OCI-LY7 (cell line): ENCODE measurements at regions of chr1 and their contacts with region 1.

Region 1: DNA sequence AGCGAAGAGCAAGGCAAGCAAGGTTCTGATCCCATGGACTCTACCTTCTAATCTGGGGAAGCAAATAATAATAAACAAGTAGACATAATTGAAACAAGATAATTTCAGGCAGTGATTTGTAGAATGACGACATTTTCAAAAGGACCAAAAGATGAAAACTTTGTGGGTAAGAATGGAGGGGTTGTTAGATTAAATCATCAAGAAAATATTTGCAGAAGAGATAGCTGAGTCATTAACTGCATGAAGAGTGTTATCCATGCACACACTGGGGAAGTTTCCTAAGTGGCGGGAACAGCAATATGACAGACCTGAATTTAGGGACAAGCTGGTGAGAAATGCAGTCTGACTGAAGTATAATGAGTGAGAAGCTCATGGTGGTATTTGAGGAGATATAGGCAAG is 583.1 kb upstream of the RGS18 start:
- DNase-seq: no peak
- H3K4me3 ChIP-seq: no peak overlapping the region
- H3K27ac ChIP-seq: no peak overlapping the region
- H3K4me1 ChIP-seq: no peaks in the 10 kb centered on the region
- CTCF ChIP-seq: no peak

Region 2: GRCh38 chr1:191438979-191439378 is 136.2 kb before region 1 on chr1:
- CTCF ChIA-PET with region 1: no interaction called
- POLR2A ChIA-PET with region 1: no interaction called
- intact Hi-C with region 1: no loop called
- DNase-seq: no peak
- H3K4me3 ChIP-seq: no peak overlapping the region
- H3K27ac ChIP-seq: no peak overlapping the region
- H3K4me1 ChIP-seq: no peaks in the 10 kb centered on the region
- CTCF ChIP-seq: no peak

Region 3: DNA sequence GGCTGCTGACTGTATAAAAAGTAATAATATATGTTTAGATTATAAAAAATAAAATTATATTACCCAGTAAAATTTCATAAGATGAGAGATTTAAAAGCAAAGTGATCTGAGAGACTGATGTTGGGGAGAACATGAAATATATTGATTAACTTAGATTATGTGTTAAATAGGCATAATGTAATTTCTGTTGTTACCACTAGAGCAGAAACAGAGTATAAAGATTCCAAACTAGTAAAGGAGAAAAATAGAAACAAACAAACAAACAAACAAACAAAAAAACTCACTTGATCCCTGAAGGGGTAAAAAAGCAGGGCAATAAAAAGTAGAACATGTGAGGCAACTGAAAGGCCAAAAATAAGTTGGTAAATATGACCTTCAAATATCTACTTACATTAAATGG is 57.4 kb before region 1 on chr1:
- CTCF ChIA-PET with region 1: no interaction called
- POLR2A ChIA-PET with region 1: no interaction called
- intact Hi-C with region 1: loop called (anchors 10 kb)
- DNase-seq: no peak
- H3K4me3 ChIP-seq: no peak overlapping the region
- H3K27ac ChIP-seq: no peak overlapping the region
- H3K4me1 ChIP-seq: no peaks in the 10 kb centered on the region
- CTCF ChIP-seq: no peak

Region 4: DNA sequence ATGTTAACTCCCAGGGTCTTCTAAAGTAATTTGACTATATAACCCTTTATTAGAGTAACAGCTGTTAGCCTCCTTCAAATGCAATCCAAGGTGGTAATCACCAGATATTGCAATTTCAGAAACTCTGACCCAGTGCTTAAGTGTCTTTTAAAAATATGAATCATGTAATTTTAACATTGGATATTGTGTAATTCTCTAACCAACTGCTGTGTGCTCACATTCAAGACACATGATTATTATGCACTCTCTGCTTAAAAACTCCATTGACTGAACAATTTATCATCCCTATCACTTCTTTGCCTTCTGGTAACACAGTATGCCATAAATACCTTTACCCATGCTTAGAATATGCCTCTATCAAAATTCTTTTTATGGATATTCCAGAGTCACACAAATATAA is 45.7 kb after region 1 on chr1:
- CTCF ChIA-PET with region 1: no interaction called
- POLR2A ChIA-PET with region 1: no interaction called
- intact Hi-C with region 1: no loop called
- DNase-seq: no peak
- H3K4me3 ChIP-seq: no peak overlapping the region
- H3K27ac ChIP-seq: no peak overlapping the region
- H3K4me1 ChIP-seq: no peaks in the 10 kb centered on the region
- CTCF ChIP-seq: no peak

Region 5: DNA sequence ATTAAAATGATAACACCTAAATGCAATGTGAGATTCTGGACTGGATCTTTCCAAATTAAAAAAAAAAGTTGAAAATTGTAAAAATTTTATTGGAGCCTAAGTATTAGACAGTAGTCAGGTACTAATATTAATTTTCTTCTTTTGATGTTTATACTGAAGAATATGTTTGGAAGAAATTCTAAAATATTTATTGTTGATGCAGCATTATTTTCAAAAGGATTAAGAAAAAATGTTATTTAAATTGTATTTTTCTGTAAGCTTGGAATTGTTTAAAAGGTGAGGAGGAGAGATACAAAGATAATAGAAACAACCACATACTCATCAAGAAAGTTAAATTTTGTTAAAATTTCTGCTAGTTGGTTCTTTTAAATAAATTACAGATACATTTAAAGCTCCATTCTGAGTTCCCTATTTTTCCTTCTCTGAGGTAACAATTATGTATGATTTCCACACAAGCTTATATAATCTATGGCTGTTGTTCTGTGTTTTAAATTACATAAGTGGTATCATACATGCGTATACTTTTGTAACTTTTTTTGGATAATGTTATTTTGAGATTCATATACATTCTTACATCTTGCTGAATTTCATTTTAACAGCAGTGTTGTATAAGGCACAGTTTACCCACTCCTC is 402.8 kb after region 1 on chr1:
- CTCF ChIA-PET with region 1: no interaction called
- POLR2A ChIA-PET with region 1: no interaction called
- intact Hi-C with region 1: no loop called
- DNase-seq: no peak
- H3K4me3 ChIP-seq: no peak overlapping the region
- H3K27ac ChIP-seq: no peak overlapping the region
- H3K4me1 ChIP-seq: no peaks in the 10 kb centered on the region
- CTCF ChIP-seq: no peak

Region 6: GRCh38 chr1:192382758-192383157 is 807.6 kb after region 1 on chr1:
- CTCF ChIA-PET with region 1: no interaction called
- POLR2A ChIA-PET with region 1: no interaction called
- intact Hi-C with region 1: no loop called
- DNase-seq: peak; percentile 4
- H3K4me3 ChIP-seq: no peak overlapping the region
- H3K27ac ChIP-seq: no peak overlapping the region
- H3K4me1 ChIP-seq: no peaks in the 10 kb centered on the region
- CTCF ChIP-seq: no peak